HepG2 (cell line): ENCODE measurements at regions of chr7 and their contacts with region 1.

Region 1: DNA sequence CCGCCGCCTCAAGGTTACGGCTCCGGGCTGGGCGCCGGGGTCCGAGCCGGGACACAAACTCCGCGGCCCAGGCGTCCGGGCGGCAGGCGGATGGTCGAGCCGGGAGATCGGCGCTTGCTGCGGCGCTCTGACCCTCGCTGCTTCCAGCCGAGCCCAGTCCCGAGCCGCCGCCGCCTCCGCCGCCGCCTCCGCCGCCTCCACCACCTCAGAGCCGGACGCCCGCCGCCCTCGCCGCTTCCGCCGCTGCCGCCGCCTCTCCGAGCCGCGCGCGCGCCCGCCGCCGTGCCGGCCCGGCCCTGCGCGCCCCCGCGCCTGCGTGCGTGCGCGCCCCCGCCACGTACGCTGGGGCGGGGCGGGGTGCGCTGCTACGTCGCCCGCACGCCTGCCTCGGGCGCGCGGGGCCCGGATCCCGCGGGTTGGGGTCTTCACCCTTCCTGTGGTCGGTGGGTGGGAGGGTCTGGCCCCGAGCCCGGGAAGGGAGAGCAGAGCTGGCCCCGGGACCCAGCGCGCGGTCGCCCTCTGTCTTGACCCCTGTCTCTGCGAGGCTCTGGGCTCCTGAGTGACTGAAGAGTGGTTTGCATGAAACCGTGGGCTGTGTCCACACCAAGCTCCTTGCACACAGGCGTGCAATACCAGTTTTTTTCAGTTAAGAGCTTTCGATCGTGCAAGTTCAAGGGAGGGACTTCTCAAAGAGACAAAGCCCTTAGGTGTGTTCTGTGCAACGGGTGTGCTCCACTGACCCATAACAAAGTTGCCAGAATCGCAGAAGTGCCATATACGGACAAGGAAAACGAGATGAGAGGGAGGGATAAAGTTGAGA is at the start of gene SMURF1:
- DNase-seq: peak; percentile 23
- ATAC-seq: peak; percentile 55
- H3K4me3 ChIP-seq: peak within 1 kb of the TSS; percentile 74 to 97 (median 89)
- H3K27ac ChIP-seq: peak within 1 kb of the TSS; percentile 86
- H3K4me1 ChIP-seq: peaks cover 37% of the 10 kb centered on the region
- H3K27me3 ChIP-seq: no peaks in the 10 kb centered on the region; a peak in 1 of 5 replicates
- CTCF ChIP-seq: 0 out of 2 replicates have a peak, but pooled peaks have one; percentile 13
- EP300 ChIP-seq: no peak
- POLR2A ChIP-seq: peak; percentile 40 to 90
- RAD21 ChIP-seq: peak; percentile 32; the same call in 1 of the 2 replicates
- total RNA-seq, gene SMURF1: 11.1 and 12.0 TPM in 2 replicates

Region 2: GRCh38 chr7:99312316-99313203 is 168.5 kb after region 1 on chr7:
- CTCF ChIA-PET with region 1: no interaction called
- POLR2A ChIA-PET with region 1: no interaction called
- in situ Hi-C with region 1: no loop called
- intact Hi-C with region 1: loop called (anchors 5 kb)
- DNase-seq: peak; percentile 68
- ATAC-seq: peak; percentile 84
- H3K4me3 ChIP-seq: no peak overlapping the region
- H3K27ac ChIP-seq: no peak overlapping the region
- H3K4me1 ChIP-seq: peaks cover 13% of the 10 kb centered on the region
- H3K27me3 ChIP-seq: no peaks in the 10 kb centered on the region
- CTCF ChIP-seq: peak; percentile 86
- EP300 ChIP-seq: no peak
- POLR2A ChIP-seq: no peak
- RAD21 ChIP-seq: peak; percentile 82